Caco-2 (cell line): ENCODE measurements at regions of chr1 and their contacts with region 1.

Region 1: DNA sequence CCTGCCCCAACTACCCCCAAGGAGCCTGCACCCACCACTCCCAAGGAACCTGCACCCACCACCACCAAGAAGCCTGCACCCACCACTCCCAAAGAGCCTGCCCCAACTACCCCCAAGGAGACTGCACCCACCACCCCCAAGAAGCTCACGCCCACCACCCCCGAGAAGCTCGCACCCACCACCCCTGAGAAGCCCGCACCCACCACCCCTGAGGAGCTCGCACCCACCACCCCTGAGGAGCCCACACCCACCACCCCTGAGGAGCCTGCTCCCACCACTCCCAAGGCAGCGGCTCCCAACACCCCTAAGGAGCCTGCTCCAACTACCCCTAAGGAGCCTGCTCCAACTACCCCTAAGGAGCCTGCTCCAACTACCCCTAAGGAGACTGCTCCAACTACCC is 67.6 kb downstream of the TPR start:
- DNase-seq: no peak
- H3K4me3 ChIP-seq: no peak overlapping the region
- H3K4me3 Mint-ChIP-seq: no peak overlapping the region
- H3K27ac Mint-ChIP-seq: no peak overlapping the region
- H3K4me1 ChIP-seq: 0 out of 2 replicates have a peak, but pooled peaks cover 4% of the 10 kb centered on the region
- H3K4me1 Mint-ChIP-seq: no peaks in the 10 kb centered on the region
- H3K27me3 ChIP-seq: no peaks in the 10 kb centered on the region
- H3K27me3 Mint-ChIP-seq: no peaks in the 10 kb centered on the region
- CTCF ChIP-seq: no peak

Region 2: DNA sequence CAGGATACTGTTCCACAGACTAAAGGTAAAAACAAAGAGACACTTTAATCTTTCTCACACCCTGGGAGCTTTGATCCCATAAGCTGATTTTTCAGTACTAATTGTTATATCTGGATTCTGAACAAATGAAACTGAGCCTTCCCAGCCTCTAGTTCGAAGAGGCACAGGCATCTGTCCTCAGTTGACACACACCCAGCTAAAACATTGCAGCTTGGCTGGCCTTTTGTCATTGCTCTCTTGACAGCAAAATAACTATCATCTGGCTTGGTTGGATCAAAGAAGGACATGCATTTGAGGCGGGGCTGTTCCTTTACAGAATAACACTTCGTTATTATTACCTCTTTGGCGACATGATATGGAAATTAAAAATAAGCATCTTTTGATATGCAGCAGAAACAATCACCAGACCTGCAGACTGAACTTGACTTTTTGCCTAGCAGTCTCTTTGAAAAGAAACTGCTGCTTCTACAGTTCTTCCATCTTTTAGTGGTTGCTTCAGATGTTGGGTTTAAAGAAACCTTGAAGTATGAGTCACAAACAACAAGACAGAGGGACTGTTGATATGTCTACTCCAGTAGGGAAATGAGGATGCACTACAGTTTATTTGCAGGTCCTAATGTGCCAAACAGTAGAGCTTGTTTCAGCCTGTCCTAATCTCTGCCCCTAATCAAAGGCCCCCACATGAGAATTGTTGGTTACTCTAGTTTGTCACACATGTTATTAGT is 98.9 kb before region 1 on chr1:
- CTCF ChIA-PET with region 1: no interaction called
- POLR2A ChIA-PET with region 1: no interaction called
- intact Hi-C with region 1: no loop called
- DNase-seq: no peak
- H3K4me3 ChIP-seq: no peak overlapping the region
- H3K4me3 Mint-ChIP-seq: no peak overlapping the region
- H3K27ac Mint-ChIP-seq: no peak overlapping the region
- H3K4me1 ChIP-seq: no peaks in the 10 kb centered on the region
- H3K4me1 Mint-ChIP-seq: no peaks in the 10 kb centered on the region
- H3K27me3 ChIP-seq: no peaks in the 10 kb centered on the region
- H3K27me3 Mint-ChIP-seq: peaks cover 4% of the 10 kb centered on the region
- CTCF ChIP-seq: no peak

Region 3: GRCh38 chr1:186218654-186219352 is 88.6 kb before region 1 on chr1:
- CTCF ChIA-PET with region 1: interaction called, 12 read pairs
- POLR2A ChIA-PET with region 1: no interaction called
- intact Hi-C with region 1: no loop called
- DNase-seq: no peak
- H3K4me3 ChIP-seq: no peak overlapping the region
- H3K4me3 Mint-ChIP-seq: no peak overlapping the region
- H3K27ac Mint-ChIP-seq: no peak overlapping the region
- H3K4me1 ChIP-seq: no peaks in the 10 kb centered on the region
- H3K4me1 Mint-ChIP-seq: no peaks in the 10 kb centered on the region
- H3K27me3 ChIP-seq: no peaks in the 10 kb centered on the region
- H3K27me3 Mint-ChIP-seq: peaks cover 11% of the 10 kb centered on the region
- CTCF ChIP-seq: no peak

Region 4: GRCh38 chr1:186340772-186341171 is 33.3 kb after region 1 on chr1:
- CTCF ChIA-PET with region 1: no interaction called
- POLR2A ChIA-PET with region 1: no interaction called
- intact Hi-C with region 1: no loop called
- DNase-seq: no peak
- H3K4me3 ChIP-seq: no peak overlapping the region
- H3K4me3 Mint-ChIP-seq: no peak overlapping the region
- H3K27ac Mint-ChIP-seq: no peak overlapping the region
- H3K4me1 ChIP-seq: 0 out of 2 replicates have a peak, but pooled peaks cover 4% of the 10 kb centered on the region
- H3K4me1 Mint-ChIP-seq: peaks cover 21% of the 10 kb centered on the region
- H3K27me3 ChIP-seq: no peaks in the 10 kb centered on the region
- H3K27me3 Mint-ChIP-seq: no peaks in the 10 kb centered on the region
- CTCF ChIP-seq: no peak

Region 5: GRCh38 chr1:186375088-186375953 is 67.9 kb after region 1 on chr1 and contains the starts of genes ODR4 and TPR:
- CTCF ChIA-PET with region 1: no interaction called
- POLR2A ChIA-PET with region 1: no interaction called
- intact Hi-C with region 1: no loop called
- DNase-seq: peak; percentile 97 to 99
- H3K4me3 ChIP-seq: peak within 1 kb of the TSS; percentile 78
- H3K4me3 Mint-ChIP-seq: peak within 1 kb of the TSS; percentile 98
- H3K27ac Mint-ChIP-seq: peak within 1 kb of the TSS; percentile 100
- H3K4me1 ChIP-seq: no peaks in the 10 kb centered on the region
- H3K4me1 Mint-ChIP-seq: no peaks in the 10 kb centered on the region
- H3K27me3 ChIP-seq: no peaks in the 10 kb centered on the region
- H3K27me3 Mint-ChIP-seq: no peaks in the 10 kb centered on the region
- CTCF ChIP-seq: peak; percentile 86 to 90
- total RNA-seq, gene ODR4: 29.1 and 32.0 TPM in 2 replicates
- total RNA-seq, gene TPR: 172 and 178 TPM in 2 replicates